MCF 10A (cell line): ENCODE measurements at regions of chr4 and their contacts with region 1.

Region 1: DNA sequence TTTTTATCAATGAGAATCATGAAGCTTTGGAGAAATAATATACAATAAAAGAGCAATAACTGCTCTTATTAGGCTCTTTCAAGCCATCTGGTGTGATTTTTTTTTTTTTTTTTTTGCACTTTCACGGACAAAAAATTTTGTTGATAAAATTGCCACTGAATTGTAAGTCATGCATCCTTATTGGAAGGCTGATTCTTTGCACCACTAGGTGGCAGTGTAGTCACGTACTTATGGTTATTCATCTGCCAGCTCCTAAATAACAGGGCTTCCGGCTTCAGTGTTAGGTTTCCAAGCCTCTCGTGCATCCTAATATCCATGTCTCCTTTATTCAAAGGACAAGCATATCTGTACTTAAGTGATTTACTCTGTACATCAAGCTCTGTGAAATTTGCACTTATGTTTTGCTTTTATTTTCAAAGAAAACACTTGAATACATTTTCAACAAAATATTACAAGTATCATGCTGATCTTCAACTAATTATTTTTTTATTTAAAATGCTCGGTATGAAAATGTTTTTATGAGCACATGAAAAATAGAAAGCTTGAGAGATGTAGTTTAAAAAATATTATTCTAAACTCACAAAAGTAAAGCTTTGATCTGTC is 1578.3 kb upstream of the TENM3 start:
- DNase-seq: peak; percentile 91
- H3K4me3 Mint-ChIP-seq: no peak overlapping the region
- H3K27ac Mint-ChIP-seq: no peak overlapping the region
- H3K4me1 Mint-ChIP-seq: no peaks in the 10 kb centered on the region
- H3K27me3 Mint-ChIP-seq: no peaks in the 10 kb centered on the region
- CTCF ChIP-seq: peak; percentile 64

Region 2: DNA sequence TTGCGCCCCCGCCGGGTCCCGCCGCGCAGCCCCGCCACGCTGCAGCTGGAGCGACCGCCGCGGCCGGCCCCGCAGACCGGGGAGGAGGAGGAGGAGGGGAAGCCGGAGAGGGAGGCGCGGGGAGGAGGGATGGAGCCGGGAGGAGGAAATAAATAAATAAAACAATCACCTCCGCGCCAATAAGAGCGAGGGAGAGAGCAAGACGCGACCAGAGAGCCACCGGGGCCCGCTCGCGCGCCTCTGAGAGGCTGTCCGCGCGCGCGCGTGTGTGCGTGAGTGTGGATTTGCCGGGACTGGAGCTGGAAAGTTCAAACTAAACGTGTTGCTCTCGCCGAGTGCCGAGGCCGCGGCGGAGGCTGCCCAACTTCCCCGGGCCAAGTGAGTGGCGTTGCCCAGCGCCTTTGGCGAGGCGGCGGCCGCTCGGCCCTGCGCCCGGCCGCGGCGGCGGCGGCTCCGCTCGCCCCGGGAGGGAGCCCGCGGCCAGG is 606.1 kb before region 1 on chr4:
- CTCF ChIA-PET with region 1: no interaction called
- POLR2A ChIA-PET with region 1: interaction called, 4 read pairs
- intact Hi-C with region 1: loop called (anchors 1 kb)
- DNase-seq: peak; percentile 74
- H3K4me3 Mint-ChIP-seq: peak overlapping the region; percentile 74
- H3K27ac Mint-ChIP-seq: no peak overlapping the region
- H3K4me1 Mint-ChIP-seq: peaks cover 6% of the 10 kb centered on the region
- H3K27me3 Mint-ChIP-seq: peaks cover 39% of the 10 kb centered on the region
- CTCF ChIP-seq: no peak

Region 3: DNA sequence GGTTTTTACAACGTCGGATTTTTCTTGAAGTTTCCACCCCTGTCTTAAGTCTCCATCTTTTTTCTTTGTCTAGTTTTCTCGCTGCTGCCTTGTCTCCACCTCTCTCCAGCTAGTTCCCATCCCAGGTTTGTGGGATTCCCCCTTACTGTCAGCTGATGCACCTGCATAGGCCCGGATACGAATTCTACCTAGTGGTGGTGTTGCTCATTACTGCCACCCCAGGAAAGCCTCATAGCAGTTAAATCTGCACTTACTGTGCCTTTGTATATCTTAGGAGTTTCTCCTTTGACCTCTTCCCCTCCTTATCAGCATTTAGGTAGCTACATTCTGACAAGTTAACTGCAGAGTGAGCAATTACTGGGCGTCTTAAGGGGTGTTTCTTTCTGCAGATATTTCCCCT is 114.8 kb before region 1 on chr4:
- CTCF ChIA-PET with region 1: no interaction called
- POLR2A ChIA-PET with region 1: no interaction called
- intact Hi-C with region 1: no loop called
- DNase-seq: peak; percentile 3
- H3K4me3 Mint-ChIP-seq: no peak overlapping the region
- H3K27ac Mint-ChIP-seq: no peak overlapping the region
- H3K4me1 Mint-ChIP-seq: no peaks in the 10 kb centered on the region
- H3K27me3 Mint-ChIP-seq: peaks cover 11% of the 10 kb centered on the region
- CTCF ChIP-seq: no peak

Region 4: DNA sequence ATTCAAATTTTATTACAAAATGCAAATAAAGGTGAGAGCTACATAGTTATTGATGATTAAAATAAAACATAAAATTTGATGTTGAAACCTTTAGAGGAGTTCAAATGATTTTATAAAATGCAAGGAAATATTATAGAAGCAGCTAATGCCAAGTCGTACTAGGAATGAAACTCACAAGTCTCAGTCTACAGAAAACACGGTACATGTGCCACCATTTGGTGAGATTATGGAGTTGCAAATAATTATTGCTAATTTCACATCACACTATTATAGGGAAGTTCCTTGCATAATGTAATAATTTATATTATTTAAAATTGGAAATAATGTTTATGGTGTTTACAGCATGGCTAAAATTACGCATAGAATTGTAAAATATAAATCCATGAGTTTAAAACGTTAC is 23.4 kb before region 1 on chr4:
- CTCF ChIA-PET with region 1: interaction called, 22 read pairs
- POLR2A ChIA-PET with region 1: no interaction called
- intact Hi-C with region 1: no loop called
- DNase-seq: peak; percentile 29
- H3K4me3 Mint-ChIP-seq: no peak overlapping the region
- H3K27ac Mint-ChIP-seq: no peak overlapping the region
- H3K4me1 Mint-ChIP-seq: no peaks in the 10 kb centered on the region
- H3K27me3 Mint-ChIP-seq: no peaks in the 10 kb centered on the region
- CTCF ChIP-seq: peak; percentile 13

Region 5: GRCh38 chr4:180828440-180829018 is 163.7 kb after region 1 on chr4:
- CTCF ChIA-PET with region 1: interaction called, 40 read pairs
- POLR2A ChIA-PET with region 1: no interaction called
- intact Hi-C with region 1: loop called (anchors 1 kb)
- DNase-seq: peak; percentile 71
- H3K4me3 Mint-ChIP-seq: no peak overlapping the region
- H3K27ac Mint-ChIP-seq: no peak overlapping the region
- H3K4me1 Mint-ChIP-seq: peaks cover 11% of the 10 kb centered on the region
- H3K27me3 Mint-ChIP-seq: no peaks in the 10 kb centered on the region
- CTCF ChIP-seq: peak; percentile 63

Region 6: GRCh38 chr4:181143250-181143854 is 478.5 kb after region 1 on chr4:
- CTCF ChIA-PET with region 1: interaction called, 4 read pairs
- POLR2A ChIA-PET with region 1: no interaction called
- intact Hi-C with region 1: loop called (anchors 5 kb)
- DNase-seq: peak; percentile 83
- H3K4me3 Mint-ChIP-seq: no peak overlapping the region
- H3K27ac Mint-ChIP-seq: no peak overlapping the region
- H3K4me1 Mint-ChIP-seq: no peaks in the 10 kb centered on the region
- H3K27me3 Mint-ChIP-seq: no peaks in the 10 kb centered on the region
- CTCF ChIP-seq: peak; percentile 88